ENCODE measurements at regions of chr14 and their contacts with region 1.

Region 1: GRCh38 chr14:21748869-21749303 is 75.3 kb upstream of the OR4E1 start:
- DNase-seq: peak in 8 of 9 donors; percentile 31 to 60 (median 50)
- ATAC-seq: peak; percentile 89
- H3K4me3 ChIP-seq: no peak overlapping the region
- H3K4me3 Mint-ChIP-seq: peak overlapping the region; percentile 41 to 84 (median 66)
- H3K27ac ChIP-seq: peak overlapping the region; percentile 41
- H3K27ac Mint-ChIP-seq: peak overlapping the region; percentile 9 to 91 (median 72)
- H3K4me1 ChIP-seq: no peaks in the 10 kb centered on the region
- H3K4me1 Mint-ChIP-seq: peaks cover 4 to 10% (median 8%) of the 10 kb centered on the region in 7 donors
- H3K27me3 ChIP-seq: no peaks in the 10 kb centered on the region
- H3K27me3 Mint-ChIP-seq: peaks cover 0 to 27% (median 6%) of the 10 kb centered on the region in 5 donors

Region 2: DNA sequence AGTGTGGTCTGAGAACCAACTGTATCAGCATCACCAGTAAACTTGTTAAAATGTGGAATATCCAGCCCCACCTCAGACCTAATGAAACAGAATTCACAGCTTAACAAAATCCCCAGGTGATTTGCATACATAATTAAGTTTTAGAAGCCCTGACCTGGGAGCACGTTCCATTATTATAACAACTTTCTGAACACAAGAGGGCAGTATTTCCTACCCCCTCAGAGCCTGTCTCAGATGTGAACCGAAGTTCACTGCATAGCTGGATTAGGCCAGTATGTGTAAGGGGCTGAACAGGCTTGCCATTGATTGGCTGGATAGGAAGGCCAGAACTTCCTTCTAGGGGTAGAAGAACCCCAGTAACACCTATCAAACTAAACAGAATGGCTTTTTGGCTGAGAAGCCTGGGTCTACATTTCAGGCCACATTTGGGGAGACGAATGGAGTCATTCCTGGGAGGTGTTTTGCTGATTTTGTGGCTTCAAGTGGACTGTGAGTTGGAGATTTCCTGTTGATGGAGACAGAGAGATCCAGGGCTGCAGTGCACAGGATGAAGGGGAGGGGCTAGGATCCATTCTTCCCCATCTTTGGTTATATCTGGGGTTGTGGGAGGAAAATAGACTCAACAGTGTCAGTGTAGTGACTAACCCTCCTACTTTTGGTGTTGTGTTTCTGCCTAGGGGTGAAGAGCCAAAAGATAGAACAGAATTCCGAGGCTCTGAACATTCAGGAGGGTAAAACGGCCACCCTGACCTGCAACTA is 19.4 kb after region 1 on chr14:
- CTCF ChIA-PET with region 1: no interaction called
- POLR2A ChIA-PET with region 1: no interaction called
- intact Hi-C with region 1: loop called in 1 of 2 experiments (anchors 1 kb)
- DNase-seq: peak in 7 of 9 donors; percentile 21 to 56 (median 41)
- ATAC-seq: peak; percentile 85
- H3K4me3 ChIP-seq: no peak overlapping the region
- H3K4me3 Mint-ChIP-seq: peak overlapping the region; percentile 42 to 81 (median 68)
- H3K27ac ChIP-seq: peak overlapping the region; percentile 6
- H3K27ac Mint-ChIP-seq: peak overlapping the region; percentile 4 to 87 (median 76)
- H3K4me1 ChIP-seq: no peaks in the 10 kb centered on the region
- H3K4me1 Mint-ChIP-seq: peaks cover 0 to 9% (median 0%) of the 10 kb centered on the region in 7 donors
- H3K27me3 ChIP-seq: no peaks in the 10 kb centered on the region
- H3K27me3 Mint-ChIP-seq: peaks cover 0 to 30% (median 5%) of the 10 kb centered on the region in 5 donors

Measured in naive thymus-derived CD4-positive, alpha-beta T cell (primary cell).